ENCODE measurements at regions of chr22 and their contacts with region 1.

Region 1: DNA sequence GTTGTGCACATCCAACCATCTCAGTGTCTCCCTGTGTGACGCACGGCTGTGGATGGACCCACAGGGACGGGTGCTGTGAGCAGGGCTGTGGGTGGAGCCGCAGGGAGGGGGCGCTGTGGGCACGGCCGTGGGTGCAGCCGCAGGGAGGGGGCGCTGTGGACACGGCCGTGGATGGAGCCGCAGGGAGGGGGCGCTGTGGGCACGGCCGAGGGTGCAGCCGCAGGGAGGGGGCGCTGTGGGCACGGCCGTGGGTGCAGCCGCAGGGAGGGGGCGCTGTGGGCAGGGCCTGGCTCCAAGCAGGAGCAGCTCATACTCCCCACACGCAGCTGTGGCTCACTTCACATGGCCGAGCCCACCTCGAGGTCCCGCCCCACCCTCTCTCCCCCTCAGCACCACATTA is 6.0 kb upstream of the MAPK11 start:
- DNase-seq: peak; percentile 39
- ATAC-seq: peak; percentile 6; the same call in 1 of the 2 replicates
- H3K4me3 Mint-ChIP-seq: no peak overlapping the region
- H3K27ac Mint-ChIP-seq: no peak overlapping the region
- H3K4me1 Mint-ChIP-seq: no peaks in the 10 kb centered on the region
- H3K27me3 Mint-ChIP-seq: peaks cover 8% of the 10 kb centered on the region
- CTCF ChIP-seq: peak; percentile 75

Region 2: DNA sequence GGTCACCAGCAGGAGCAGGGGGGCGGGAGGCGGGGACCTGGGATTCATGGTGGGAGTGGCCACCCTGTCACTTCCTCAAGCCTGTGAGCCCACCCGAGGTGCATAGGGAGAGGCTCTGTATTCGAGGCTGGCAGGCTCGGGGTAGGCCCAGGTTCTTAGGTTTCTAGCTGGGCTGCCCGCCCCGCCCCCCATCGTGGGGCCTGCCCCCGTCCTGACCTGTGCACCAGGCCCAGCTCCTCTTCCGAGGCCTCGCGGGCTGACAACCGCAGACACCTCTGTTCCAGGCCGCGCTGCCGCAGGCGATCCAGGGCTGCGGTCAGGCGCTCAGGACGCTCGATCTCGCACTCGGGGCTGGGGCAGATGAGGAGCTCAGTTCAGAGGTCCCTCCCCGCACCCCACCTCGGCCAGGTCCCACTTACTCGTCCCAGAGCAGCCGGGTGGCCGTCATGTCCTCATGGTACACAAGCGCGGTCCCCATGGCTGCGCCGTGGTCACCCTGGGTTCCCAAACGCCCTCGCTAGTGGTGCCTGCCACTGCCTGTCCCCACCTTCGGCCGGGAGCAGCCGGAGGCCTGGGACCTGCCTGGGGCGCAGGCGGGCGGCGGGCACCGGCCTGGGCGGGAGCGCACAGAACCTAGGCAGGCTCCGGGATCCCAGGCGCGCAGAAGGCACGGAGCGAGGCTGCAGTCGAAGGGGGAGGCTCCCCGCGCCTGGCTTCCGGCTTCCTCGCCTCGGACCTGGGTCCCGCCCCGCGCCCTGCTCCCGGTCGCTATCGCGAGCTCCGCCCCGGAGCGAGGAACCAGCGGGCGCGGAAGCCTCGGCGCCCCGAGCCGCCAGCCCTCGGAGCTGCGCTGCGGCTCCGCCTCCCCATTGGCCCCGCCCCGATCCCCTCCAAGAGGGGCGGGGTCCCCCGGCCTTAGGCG is 25.3 kb before region 1 on chr22 and contains the start of gene HDAC10:
- CTCF ChIA-PET with region 1: interaction called, 12 read pairs
- POLR2A ChIA-PET with region 1: interaction called, 7 read pairs
- DNase-seq: peak; percentile 89
- ATAC-seq: peak; percentile 74
- H3K4me3 Mint-ChIP-seq: peak within 1 kb of the TSS; percentile 72
- H3K27ac Mint-ChIP-seq: no peak within 1 kb of the TSS
- H3K4me1 Mint-ChIP-seq: peaks cover 4% of the 10 kb centered on the region; the same call in 1 of the 2 replicates
- H3K27me3 Mint-ChIP-seq: no peaks in the 10 kb centered on the region; the same call in 1 of the 2 replicates
- CTCF ChIP-seq: no peak
- total RNA-seq, gene HDAC10: 31.9 to 40.9 TPM (median 38.2 TPM) in 3 replicates

Region 3: DNA sequence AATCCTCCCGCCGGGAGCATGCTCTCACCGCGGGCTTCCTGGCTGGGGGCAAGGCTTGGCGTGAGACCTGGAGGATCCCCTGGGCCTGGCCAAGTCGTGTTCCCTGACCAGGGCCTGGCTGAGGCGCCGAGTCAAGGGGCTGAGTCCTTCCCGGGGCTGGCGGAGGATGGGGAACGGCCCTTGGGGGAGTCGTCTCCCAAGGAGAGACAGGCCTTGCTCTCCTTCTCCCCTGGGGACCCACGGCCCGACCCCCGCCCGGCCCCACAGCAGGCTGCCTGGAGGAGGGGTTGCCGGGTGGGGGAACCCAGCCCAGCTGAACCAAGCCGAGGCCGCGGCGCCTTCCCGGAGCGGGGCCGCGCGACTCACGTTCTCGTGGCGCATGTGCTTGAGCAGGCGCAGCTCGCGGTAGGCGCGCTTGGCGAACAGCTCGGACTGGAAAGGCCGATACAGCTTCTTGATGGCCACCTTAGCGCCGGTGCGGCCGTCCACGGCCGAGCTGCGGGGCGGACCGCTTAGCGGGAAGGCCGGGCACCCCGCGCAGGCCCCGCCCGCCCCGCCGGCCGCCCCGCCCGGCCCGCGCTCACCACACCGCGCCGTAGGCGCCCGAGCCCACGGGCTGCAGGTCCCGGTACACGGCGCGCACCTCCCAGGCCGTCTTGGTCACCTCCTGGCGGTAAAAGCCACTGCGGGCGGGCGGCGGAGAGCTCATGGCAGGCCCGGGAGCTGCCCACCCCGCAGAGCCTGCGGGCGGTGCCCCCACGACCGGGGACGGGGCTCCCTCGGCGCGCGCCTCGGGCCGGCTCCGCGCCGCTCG is 15.1 kb before region 1 on chr22:
- CTCF ChIA-PET with region 1: interaction called, 21 read pairs
- POLR2A ChIA-PET with region 1: no interaction called
- DNase-seq: peak; percentile 43
- ATAC-seq: peak; percentile 14
- H3K4me3 Mint-ChIP-seq: peak overlapping the region; percentile 54
- H3K27ac Mint-ChIP-seq: no peak overlapping the region
- H3K4me1 Mint-ChIP-seq: peaks cover 8% of the 10 kb centered on the region
- H3K27me3 Mint-ChIP-seq: peaks cover 16% of the 10 kb centered on the region
- CTCF ChIP-seq: no peak

Region 4: GRCh38 chr22:50293441-50294318 is 17.5 kb after region 1 on chr22:
- CTCF ChIA-PET with region 1: interaction called, 23 read pairs
- POLR2A ChIA-PET with region 1: interaction called, 3 read pairs
- DNase-seq: peak; percentile 85
- ATAC-seq: peak; percentile 89
- H3K4me3 Mint-ChIP-seq: no peak overlapping the region
- H3K27ac Mint-ChIP-seq: peak overlapping the region; percentile 72; the same call in 1 of the 2 replicates
- H3K4me1 Mint-ChIP-seq: peaks cover 27% of the 10 kb centered on the region
- H3K27me3 Mint-ChIP-seq: no peaks in the 10 kb centered on the region
- CTCF ChIP-seq: no peak

Region 5: DNA sequence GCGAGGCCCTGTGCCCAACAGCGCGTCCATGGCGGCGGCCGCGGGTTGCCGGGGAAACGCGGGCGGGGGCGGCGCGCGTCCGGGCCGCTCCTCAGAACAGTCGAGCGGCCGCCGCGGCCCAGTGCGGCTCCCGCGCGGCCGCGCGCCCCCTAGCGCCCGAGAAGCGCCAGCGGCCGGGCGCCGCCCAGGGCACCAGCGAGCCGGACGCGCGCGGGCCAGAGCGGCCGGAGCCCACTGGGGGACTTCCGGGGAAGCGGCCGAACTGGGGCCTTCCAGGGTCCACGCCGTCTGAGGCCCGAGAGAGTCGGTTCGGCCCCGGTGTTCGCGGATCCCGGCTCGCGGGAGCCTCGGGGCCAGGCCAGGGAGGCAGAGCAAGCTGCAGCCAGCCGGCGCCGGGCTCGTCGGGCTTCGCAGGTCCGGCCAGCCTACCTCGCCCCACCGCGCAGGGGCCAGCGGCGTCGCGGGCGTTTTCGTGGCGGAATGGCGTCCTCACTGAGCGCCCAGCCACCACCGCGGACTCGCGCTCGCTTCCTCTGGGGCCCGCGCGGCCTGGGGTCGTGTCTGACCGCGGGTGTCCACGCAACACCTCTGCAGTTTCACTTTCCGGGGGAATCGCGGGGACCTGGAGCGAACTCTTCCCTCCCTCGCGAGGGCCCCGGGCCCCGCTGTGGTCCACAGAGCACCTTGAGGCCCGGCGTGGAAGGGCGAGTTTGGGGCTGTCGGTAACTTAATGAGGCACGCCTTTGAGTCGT is 51.0 kb after region 1 on chr22 and contains the start of gene DENND6B:
- CTCF ChIA-PET with region 1: interaction called, 37 read pairs
- POLR2A ChIA-PET with region 1: no interaction called
- DNase-seq: peak; percentile 77
- ATAC-seq: peak; percentile 92
- H3K4me3 Mint-ChIP-seq: peak within 1 kb of the TSS; percentile 87
- H3K27ac Mint-ChIP-seq: no peak within 1 kb of the TSS; the same call in 1 of the 2 replicates
- H3K4me1 Mint-ChIP-seq: peaks cover 3% of the 10 kb centered on the region; the same call in 1 of the 2 replicates
- H3K27me3 Mint-ChIP-seq: peaks cover 28% of the 10 kb centered on the region
- CTCF ChIP-seq: peak; percentile 33; the same call in 1 of the 2 replicates
- total RNA-seq, gene DENND6B: 2.3 to 2.7 TPM (median 2.5 TPM) in 3 replicates